CD4-positive, alpha-beta T cell (primary cell): ENCODE measurements at regions of chr1 and their contacts with region 1.

Region 1: GRCh38 chr1:37825506-37825905 is 17.5 kb upstream of the YRDC start:
- DNase-seq: peak in 2 of 14 experiments; percentile 37 to 47
- ATAC-seq: no peak
- H3K4me3 ChIP-seq: no peak overlapping the region
- H3K4me3 Mint-ChIP-seq: no peak overlapping the region
- H3K27ac ChIP-seq: no peak overlapping the region
- H3K27ac Mint-ChIP-seq: no peak overlapping the region
- H3K4me1 ChIP-seq: no peaks in the 10 kb centered on the region
- H3K4me1 Mint-ChIP-seq: no peaks in the 10 kb centered on the region
- H3K27me3 ChIP-seq: no peaks in the 10 kb centered on the region
- H3K27me3 Mint-ChIP-seq: no peaks in the 10 kb centered on the region
- CTCF ChIP-seq: no peak

Region 2: GRCh38 chr1:37793773-37794371 is 31.6 kb before region 1 on chr1 and contains the start of gene MANEAL:
- CTCF ChIA-PET with region 1: no interaction called
- POLR2A ChIA-PET with region 1: no interaction called
- intact Hi-C with region 1: loop called in 1 of 2 experiments (anchors 1 kb)
- DNase-seq: peak in 7 of 14 experiments; percentile 21 to 67 (median 34)
- ATAC-seq: peak; percentile 75
- H3K4me3 ChIP-seq: peak within 1 kb of the TSS; percentile 43
- H3K4me3 Mint-ChIP-seq: peak within 1 kb of the TSS; percentile 84
- H3K27ac ChIP-seq: no peak within 1 kb of the TSS
- H3K27ac Mint-ChIP-seq: no peak within 1 kb of the TSS
- H3K4me1 ChIP-seq: peaks cover 19% of the 10 kb centered on the region
- H3K4me1 Mint-ChIP-seq: no peaks in the 10 kb centered on the region
- H3K27me3 ChIP-seq: peaks cover 20 to 21% of the 10 kb centered on the region in 2 experiments
- H3K27me3 Mint-ChIP-seq: peaks cover 53% of the 10 kb centered on the region
- CTCF ChIP-seq: no peak
- total RNA-seq, gene MANEAL: 0.33 to 0.53 TPM

Region 3: GRCh38 chr1:37901191-37901892 is 75.8 kb after region 1 on chr1:
- CTCF ChIA-PET with region 1: no interaction called
- POLR2A ChIA-PET with region 1: no interaction called
- intact Hi-C with region 1: no loop called
- DNase-seq: peak in 2 of 14 experiments; percentile 40 to 42
- ATAC-seq: no peak
- H3K4me3 ChIP-seq: no peak overlapping the region
- H3K4me3 Mint-ChIP-seq: no peak overlapping the region
- H3K27ac ChIP-seq: peak overlapping the region in 1 of 2 donors; percentile 5
- H3K27ac Mint-ChIP-seq: no peak overlapping the region
- H3K4me1 ChIP-seq: no peaks in the 10 kb centered on the region
- H3K4me1 Mint-ChIP-seq: no peaks in the 10 kb centered on the region
- H3K27me3 ChIP-seq: no peaks in the 10 kb centered on the region
- H3K27me3 Mint-ChIP-seq: no peaks in the 10 kb centered on the region
- CTCF ChIP-seq: no peak